Prostate gland (tissue), 2 donors: ENCODE measurements at regions of chr2 and their contacts with region 1.

Region 1: GRCh38 chr2:197184959-197185586 is 125.5 kb downstream of the ANKRD44 start:
- DNase-seq: peak; percentile 60
- H3K4me3 ChIP-seq: no peak overlapping the region
- H3K27ac ChIP-seq: no peak overlapping the region
- H3K4me1 ChIP-seq: no peaks in the 10 kb centered on the region
- H3K27me3 ChIP-seq: no peaks in the 10 kb centered on the region
- CTCF ChIP-seq: no peak
- POLR2A ChIP-seq: no peak

Region 2: DNA sequence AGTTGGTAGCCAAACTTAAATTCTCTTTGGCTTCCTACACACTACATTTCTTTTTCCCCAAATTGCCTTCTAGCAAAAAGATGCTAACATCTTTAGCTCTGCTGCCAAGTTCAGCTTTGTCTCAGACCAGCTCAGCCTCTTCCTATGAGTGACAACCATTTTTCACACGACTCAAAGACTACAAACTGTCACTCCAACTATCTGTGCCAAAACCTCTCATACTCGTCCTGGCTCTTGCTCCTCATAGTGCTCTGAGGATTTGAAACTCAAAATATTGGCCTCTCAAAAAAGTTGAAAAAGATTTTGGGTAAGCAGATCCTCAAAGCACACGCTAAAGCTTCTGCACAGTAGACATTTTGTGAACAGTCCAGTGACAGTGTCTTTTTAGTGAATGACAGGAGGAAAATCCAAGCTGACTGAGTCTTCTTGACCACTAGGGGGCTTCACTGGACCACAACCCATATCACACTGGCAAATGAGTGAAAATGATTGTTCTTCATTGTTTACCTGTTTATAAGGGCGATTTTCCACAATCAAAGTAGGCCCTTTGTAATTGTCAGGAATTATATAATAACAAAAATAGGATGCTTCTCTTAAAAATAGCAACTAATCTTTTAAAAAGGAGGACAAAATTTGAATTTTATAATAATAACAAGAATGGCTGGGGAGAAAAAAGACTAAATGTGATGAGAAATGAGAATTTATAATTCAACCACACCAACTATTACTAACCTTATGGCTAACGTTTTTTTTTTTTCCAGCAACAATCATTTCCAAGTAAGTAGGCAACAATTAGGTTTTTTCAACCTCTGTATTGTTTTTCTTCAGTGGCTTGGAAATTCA is 173.1 kb before region 1 on chr2:
- intact Hi-C with region 1: loop called (anchors 10 kb)
- DNase-seq: no peak
- H3K4me3 ChIP-seq: no peak overlapping the region
- H3K27ac ChIP-seq: no peak overlapping the region
- H3K4me1 ChIP-seq: no peaks in the 10 kb centered on the region
- H3K27me3 ChIP-seq: no peaks in the 10 kb centered on the region
- CTCF ChIP-seq: peak; percentile 45 to 59 (median 56)
- POLR2A ChIP-seq: no peak

Region 3: GRCh38 chr2:197097578-197098366 is 87.3 kb before region 1 on chr2:
- intact Hi-C with region 1: no loop called
- DNase-seq: no peak
- H3K4me3 ChIP-seq: no peak overlapping the region
- H3K27ac ChIP-seq: peak overlapping the region in 1 of 2 donors; percentile 5
- H3K4me1 ChIP-seq: no peaks in the 10 kb centered on the region
- H3K27me3 ChIP-seq: no peaks in the 10 kb centered on the region
- CTCF ChIP-seq: no peak
- POLR2A ChIP-seq: no peak